ENCODE measurements at regions of chr20 and their contacts with region 1.

Region 1: DNA sequence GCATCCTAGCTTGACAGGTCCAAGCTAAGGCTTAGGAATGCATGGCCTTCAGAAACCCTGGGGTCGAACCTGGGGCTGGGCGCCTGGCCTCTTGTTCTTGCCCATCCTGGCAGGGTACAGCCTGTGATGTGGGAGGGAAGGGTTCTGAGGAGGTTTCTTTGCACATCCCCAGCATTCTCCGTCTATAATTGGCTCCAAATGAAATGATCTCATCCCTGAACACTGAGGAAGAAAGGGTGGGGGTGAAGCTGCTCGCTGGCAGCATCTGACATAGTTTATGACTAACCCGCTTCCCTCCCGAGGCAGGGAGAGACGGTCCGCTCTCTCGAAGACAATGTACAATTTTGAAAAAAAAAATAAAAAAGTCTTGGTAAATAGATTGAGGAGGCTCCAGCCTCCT is 67.1 kb upstream of the ZNFX1 start:
- DNase-seq: peak in 4 of 5 donors; percentile 18 to 55 (median 37)
- H3K4me3 ChIP-seq: no peak overlapping the region
- H3K27ac ChIP-seq: no peak overlapping the region
- H3K4me1 ChIP-seq: no peaks in the 10 kb centered on the region
- H3K27me3 ChIP-seq: no peaks in the 10 kb centered on the region
- CTCF ChIP-seq: no peak
- EP300 ChIP-seq: no peak
- POLR2A ChIP-seq: no peak

Region 2: DNA sequence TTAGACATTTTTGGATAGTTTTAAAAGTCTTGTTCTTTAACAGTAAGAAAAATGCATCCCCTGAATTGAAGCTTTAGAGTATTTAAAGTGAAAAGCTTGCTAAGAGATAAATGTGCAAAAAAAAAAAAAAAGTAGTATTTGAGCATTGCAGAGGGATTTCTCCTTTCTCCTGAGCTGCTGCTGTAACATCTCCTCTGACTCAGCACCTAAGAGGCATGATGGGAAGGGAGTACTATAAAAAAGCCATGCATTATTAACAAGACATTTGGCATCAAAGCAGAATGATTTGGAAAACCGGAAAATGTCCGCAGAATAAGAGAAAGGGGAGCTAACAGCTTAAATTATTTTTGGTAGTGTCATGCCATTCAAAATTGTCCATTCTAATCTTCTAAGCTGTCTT is 340.8 kb after region 1 on chr20:
- intact Hi-C with region 1: no loop called
- DNase-seq: no peak
- H3K4me3 ChIP-seq: no peak overlapping the region
- H3K27ac ChIP-seq: no peak overlapping the region
- H3K4me1 ChIP-seq: peaks cover 9% of the 10 kb centered on the region
- H3K27me3 ChIP-seq: no peaks in the 10 kb centered on the region
- CTCF ChIP-seq: no peak
- EP300 ChIP-seq: no peak
- POLR2A ChIP-seq: no peak

Region 3: GRCh38 chr20:50020288-50020687 is 675.3 kb after region 1 on chr20:
- intact Hi-C with region 1: no loop called
- DNase-seq: no peak
- H3K4me3 ChIP-seq: no peak overlapping the region
- H3K27ac ChIP-seq: no peak overlapping the region
- H3K4me1 ChIP-seq: no peaks in the 10 kb centered on the region
- H3K27me3 ChIP-seq: no peaks in the 10 kb centered on the region
- CTCF ChIP-seq: no peak
- EP300 ChIP-seq: no peak
- POLR2A ChIP-seq: no peak

Region 4: DNA sequence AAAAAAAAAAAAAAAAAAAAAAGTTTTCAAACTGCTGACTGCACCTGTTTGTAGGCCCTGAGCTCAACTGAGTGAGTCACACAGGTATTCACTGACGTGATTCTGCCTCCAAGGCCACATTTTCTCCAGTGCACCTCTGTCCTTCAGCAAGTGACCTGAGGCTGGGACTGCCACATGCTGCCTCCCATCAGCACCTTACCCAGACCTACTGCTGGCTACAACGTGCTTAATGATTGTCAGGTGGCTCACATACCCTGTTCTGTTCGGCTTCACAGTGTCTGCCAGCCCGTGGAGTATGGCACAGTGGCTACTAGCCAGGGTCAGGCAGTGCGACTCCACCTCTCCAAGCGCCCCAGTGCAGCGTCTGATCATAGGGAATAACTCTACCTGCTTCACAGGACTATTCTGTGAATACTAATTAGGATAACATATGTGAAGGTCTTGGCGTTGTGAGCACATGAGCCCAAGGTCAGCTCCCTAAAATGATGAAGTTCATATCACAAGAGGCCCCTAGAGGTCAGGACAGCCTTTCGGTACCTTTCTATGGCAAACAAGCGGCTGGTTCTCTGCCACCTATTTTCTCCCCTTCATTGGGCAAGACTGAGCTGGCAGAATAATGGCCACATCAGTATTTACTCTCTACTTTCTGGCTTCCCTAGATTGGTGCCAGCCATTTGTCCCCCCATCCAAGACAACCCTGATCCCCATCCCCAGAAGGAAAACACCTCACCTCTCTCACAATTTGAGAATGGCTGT is 1318.3 kb after region 1 on chr20:
- intact Hi-C with region 1: loop called in 1 of 4 experiments (anchors 10 kb)
- DNase-seq: no peak
- H3K4me3 ChIP-seq: no peak overlapping the region
- H3K27ac ChIP-seq: no peak overlapping the region
- H3K4me1 ChIP-seq: peaks cover 24% of the 10 kb centered on the region
- H3K27me3 ChIP-seq: no peaks in the 10 kb centered on the region
- CTCF ChIP-seq: no peak
- EP300 ChIP-seq: no peak
- POLR2A ChIP-seq: no peak